ENCODE measurements at regions of chr1 and their contacts with region 1.

Region 1: DNA sequence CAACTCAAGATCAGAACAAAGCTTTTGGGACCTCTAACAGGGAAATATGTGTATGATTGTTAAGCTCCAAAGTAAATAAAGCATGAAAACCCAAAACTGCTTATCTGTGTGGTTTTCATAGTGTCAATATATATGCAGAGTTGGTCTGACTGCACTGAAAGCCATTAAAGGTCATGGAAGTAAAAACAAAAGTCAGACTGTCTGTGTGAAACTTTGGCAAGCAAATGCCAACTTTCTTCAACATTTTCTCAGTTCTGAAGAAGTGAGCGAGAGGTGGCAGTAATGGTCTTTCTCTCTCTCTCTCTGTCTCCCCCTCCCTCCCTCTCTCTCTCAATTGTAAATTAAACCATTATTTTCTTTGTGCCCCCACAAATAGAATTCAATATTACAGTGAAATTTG is 100.1 kb upstream of the S1PR1 start:
- DNase-seq: peak; percentile 91
- H3K4me3 ChIP-seq: no peak overlapping the region
- H3K27ac ChIP-seq: no peak overlapping the region
- H3K4me1 ChIP-seq: peaks cover 28% of the 10 kb centered on the region
- H3K27me3 ChIP-seq: no peaks in the 10 kb centered on the region
- CTCF ChIP-seq: peak; percentile 33 to 43
- POLR2A ChIP-seq: no peak

Region 2: GRCh38 chr1:101108111-101108500 is 28.6 kb before region 1 on chr1:
- CTCF ChIA-PET with region 1: no interaction called
- POLR2A ChIA-PET with region 1: no interaction called
- dilution Hi-C with region 1: no loop called
- intact Hi-C with region 1: no loop called
- DNase-seq: peak; percentile 23
- H3K4me3 ChIP-seq: no peak overlapping the region
- H3K27ac ChIP-seq: no peak overlapping the region
- H3K4me1 ChIP-seq: peaks cover 12% of the 10 kb centered on the region
- H3K27me3 ChIP-seq: no peaks in the 10 kb centered on the region
- CTCF ChIP-seq: no peak
- POLR2A ChIP-seq: no peak

Region 3: DNA sequence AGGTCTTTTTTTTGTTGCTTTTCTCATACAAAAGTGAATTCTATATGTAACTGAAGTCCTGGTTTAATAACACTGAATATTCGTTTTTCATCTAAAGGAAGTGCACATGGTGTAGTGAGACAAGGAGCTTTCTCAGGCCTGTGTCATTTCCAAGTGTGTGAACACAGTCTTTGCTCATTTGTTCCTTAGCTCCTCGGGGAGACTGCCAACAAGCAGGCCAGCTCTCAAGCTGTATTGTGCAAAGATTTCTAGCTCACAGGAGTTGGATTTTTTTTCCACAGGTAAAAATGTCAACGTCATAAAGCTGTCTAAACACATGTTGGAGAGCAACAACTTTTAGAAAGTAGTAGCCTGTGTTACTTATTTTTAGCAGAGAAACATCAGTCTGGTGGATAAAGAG is 12.2 kb after region 1 on chr1:
- CTCF ChIA-PET with region 1: interaction called, 26 read pairs
- POLR2A ChIA-PET with region 1: no interaction called
- dilution Hi-C with region 1: no loop called
- intact Hi-C with region 1: no loop called
- DNase-seq: peak; percentile 84
- H3K4me3 ChIP-seq: no peak overlapping the region
- H3K27ac ChIP-seq: peak overlapping the region; percentile 19
- H3K4me1 ChIP-seq: peaks cover 30% of the 10 kb centered on the region
- H3K27me3 ChIP-seq: no peaks in the 10 kb centered on the region
- CTCF ChIP-seq: no peak
- POLR2A ChIP-seq: no peak

Region 4: GRCh38 chr1:101178688-101179491 is 42.2 kb after region 1 on chr1:
- CTCF ChIA-PET with region 1: interaction called, 4 read pairs
- POLR2A ChIA-PET with region 1: no interaction called
- dilution Hi-C with region 1: no loop called
- intact Hi-C with region 1: loop called (anchors 2 kb)
- DNase-seq: no peak
- H3K4me3 ChIP-seq: no peak overlapping the region
- H3K27ac ChIP-seq: peak overlapping the region; percentile 9
- H3K4me1 ChIP-seq: peaks cover 62% of the 10 kb centered on the region
- H3K27me3 ChIP-seq: no peaks in the 10 kb centered on the region
- CTCF ChIP-seq: no peak
- POLR2A ChIP-seq: no peak

Region 5: GRCh38 chr1:101438359-101438758 is 301.6 kb after region 1 on chr1:
- CTCF ChIA-PET with region 1: interaction called, 3 read pairs
- POLR2A ChIA-PET with region 1: no interaction called
- dilution Hi-C with region 1: no loop called
- intact Hi-C with region 1: loop called (anchors 1 kb)
- DNase-seq: peak; percentile 59
- H3K4me3 ChIP-seq: no peak overlapping the region
- H3K27ac ChIP-seq: no peak overlapping the region
- H3K4me1 ChIP-seq: no peaks in the 10 kb centered on the region
- H3K27me3 ChIP-seq: peaks cover 6 to 8% of the 10 kb centered on the region in 2 experiments
- CTCF ChIP-seq: peak; percentile 44 to 55
- POLR2A ChIP-seq: no peak

Measured in endothelial cell of umbilical vein (primary cell).